ENCODE measurements at regions of chr15 and their contacts with region 1.

Region 1: DNA sequence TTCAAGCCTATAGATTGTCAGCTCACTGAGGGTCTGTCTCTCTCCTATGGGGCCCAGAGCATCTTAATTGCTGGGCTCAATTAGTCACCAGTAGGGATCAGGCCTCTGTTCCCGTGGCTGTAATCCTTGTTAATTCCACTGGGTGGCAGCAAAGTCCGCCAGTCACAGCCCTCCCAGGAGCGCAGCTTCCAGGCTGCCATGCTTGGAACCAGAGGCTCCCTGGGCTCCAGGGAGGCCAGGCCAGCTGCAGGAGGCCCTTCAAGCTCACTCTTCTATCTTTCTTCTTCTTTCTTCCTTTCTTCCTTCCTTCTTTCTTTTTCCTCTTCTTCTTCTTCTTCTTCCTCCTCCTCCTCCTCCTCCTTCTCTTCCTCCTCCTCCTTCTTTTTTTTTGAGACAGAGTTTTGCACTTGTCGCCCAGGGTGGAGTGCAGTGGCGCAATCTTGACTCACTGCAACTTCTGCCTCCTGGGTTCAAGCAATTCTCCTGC is 14.4 kb downstream of the RNU5B-1 start:
- DNase-seq: peak in 4 of 5 donors; percentile 89 to 91 (median 90)
- H3K4me3 ChIP-seq: no peak overlapping the region
- H3K27ac ChIP-seq: no peak overlapping the region
- H3K4me1 ChIP-seq: no peaks in the 10 kb centered on the region
- H3K27me3 ChIP-seq: no peaks in the 10 kb centered on the region
- CTCF ChIP-seq: peak; percentile 99

Region 2: DNA sequence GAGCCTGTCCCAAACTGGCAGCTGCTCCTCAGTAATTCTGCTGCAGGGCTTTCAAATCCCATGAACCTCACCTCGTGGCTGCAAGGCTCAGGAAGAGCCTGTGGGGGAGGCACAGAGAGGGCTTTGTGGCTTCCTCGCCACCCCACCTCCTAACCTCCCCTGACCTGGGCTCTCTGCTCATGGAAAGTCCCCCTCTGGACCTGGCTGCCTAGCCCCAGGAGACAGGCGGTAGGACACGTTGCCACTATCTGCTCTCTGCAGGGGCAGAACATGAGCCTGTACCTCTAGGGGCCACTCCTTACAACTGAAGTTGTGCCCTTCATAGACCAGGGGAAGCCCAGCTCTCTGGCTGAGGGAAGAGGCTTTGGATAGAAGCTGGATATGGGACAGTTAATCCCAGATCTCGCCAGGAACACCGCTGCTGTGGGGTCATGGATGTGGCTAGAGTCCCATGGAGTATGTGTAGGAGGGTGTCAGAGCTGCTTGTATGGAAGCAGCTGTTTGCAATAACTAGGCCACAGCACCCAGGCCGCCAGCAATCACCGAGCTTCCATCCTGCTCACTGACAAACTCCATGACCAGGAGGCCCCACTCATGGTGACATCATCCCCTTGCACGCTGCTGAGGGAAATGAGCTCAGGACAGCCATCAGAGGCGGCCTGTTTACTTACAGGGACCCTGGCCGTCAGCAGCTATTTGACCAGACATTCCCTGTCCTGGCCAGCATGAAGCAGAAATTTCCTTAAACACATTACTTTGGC is 73.6 kb before region 1 on chr15:
- intact Hi-C with region 1: no loop called
- DNase-seq: peak; percentile 70 to 94 (median 77)
- H3K4me3 ChIP-seq: no peak overlapping the region
- H3K27ac ChIP-seq: peak overlapping the region in 1 of 2 donors; percentile 8
- H3K4me1 ChIP-seq: peaks cover 0 to 2% (median 0%) of the 10 kb centered on the region in 3 donors
- H3K27me3 ChIP-seq: no peaks in the 10 kb centered on the region
- CTCF ChIP-seq: no peak

Region 3: GRCh38 chr15:65384895-65385858 is 66.3 kb after region 1 on chr15:
- intact Hi-C with region 1: loop called (anchors 5 kb)
- DNase-seq: peak; percentile 93 to 96 (median 95)
- H3K4me3 ChIP-seq: peak overlapping the region in 2 of 3 donors; percentile 46 to 62
- H3K27ac ChIP-seq: no peak overlapping the region
- H3K4me1 ChIP-seq: peaks cover 0 to 13% (median 5%) of the 10 kb centered on the region in 3 donors
- H3K27me3 ChIP-seq: no peaks in the 10 kb centered on the region
- CTCF ChIP-seq: peak; percentile 90